ENCODE measurements at regions of chr13 and their contacts with region 1.

Region 1: GRCh38 chr13:46679369-46680120 is 117.4 kb downstream of the ESD start:
- ATAC-seq: peak in 4 of 8 experiments; percentile 26 to 98 (median 90)
- H3K4me3 ChIP-seq: no peak overlapping the region
- H3K27ac ChIP-seq: no peak overlapping the region
- H3K4me1 ChIP-seq: no peaks in the 10 kb centered on the region

Region 2: DNA sequence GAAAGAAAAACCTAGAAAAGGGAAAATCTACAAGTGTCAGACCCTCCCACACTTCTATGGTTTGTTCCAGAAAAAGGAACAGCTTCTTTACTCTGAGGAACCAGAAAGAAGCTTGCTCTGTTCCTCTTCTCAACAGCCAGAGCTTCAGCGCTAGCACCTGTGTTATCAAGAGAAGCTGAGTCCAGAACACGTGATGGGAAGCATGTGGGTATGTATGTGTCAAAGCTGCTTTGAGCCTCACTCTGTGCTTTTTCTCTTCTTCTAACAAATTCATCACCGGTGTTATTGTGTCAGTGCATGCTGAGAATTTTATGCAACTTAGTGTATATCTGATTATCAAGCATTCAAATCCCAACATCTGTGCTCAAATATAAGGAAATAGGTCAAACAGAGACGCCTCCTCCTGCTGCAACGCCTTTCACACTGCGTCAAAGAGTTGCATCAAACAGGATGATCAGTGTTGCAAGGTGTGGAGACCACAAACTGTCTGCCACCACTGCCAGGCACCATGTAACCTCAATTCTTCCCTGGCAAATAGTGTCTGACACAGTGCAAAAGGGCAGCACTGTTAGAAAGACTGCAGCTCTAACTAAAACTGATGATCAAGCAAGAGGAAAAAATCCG is 383.9 kb before region 1 on chr13:
- in situ Hi-C with region 1: no loop called
- ATAC-seq: peak in 3 of 8 experiments; percentile 18 to 58 (median 36)
- H3K4me3 ChIP-seq: no peak overlapping the region
- H3K27ac ChIP-seq: peak overlapping the region in 1 of 2 donors; percentile 66
- H3K4me1 ChIP-seq: peaks cover 0 to 2% of the 10 kb centered on the region in 2 donors

Region 3: DNA sequence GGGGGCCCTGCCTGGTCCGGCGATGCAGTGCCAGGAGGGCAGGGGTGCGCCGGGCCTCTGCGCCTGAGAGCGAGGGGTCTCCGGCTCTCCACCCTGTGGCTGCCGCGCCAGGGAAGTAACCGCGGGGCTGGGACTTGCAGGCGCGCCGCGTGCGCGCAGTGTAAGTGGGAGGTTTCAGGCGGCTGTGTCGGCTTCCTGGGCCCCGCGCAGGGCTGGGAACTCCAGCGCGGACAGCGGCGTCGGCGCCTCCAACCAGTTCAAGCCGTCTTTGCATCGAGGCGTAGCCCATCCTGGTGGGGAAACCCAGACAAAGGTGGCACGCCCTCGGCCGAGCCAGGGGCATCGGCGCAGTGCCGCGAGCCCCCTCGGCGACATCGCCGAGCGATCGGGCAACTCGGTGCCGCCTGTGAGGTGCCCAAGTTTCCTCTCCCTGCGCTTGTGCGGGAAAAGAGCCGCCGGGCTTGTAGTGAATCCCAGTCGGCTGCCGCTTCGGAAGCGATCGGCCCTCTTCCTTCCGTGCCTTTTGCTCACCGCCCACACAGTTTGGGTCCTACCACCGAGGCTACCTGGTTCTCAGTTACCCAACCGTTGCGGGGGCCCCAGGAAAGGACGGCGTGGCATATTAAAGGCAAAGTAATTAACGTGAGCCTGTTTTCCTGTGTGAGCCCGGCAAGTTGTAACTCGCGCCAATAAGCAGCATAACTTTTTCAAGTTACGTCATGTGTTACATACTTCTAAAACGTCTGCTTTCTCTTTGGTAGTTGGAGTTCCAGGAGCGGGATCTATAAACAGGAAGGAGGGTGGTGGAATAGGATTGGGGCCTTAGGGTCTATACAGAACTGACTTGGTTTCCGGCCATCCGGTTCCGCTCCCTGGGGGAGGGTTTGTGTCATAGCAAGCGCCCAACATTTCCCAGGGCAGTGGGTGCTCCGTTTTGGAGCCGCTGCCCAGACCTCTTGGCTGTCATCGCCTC is 125.4 kb before region 1 on chr13:
- in situ Hi-C with region 1: loop called in 1 of 9 experiments (anchors 25 kb)
- ATAC-seq: peak; percentile 52 to 66 (median 60)
- H3K4me3 ChIP-seq: peak overlapping the region; percentile 62 to 97 (median 80)
- H3K27ac ChIP-seq: peak overlapping the region; percentile 40 to 68
- H3K4me1 ChIP-seq: peaks cover 4 to 8% of the 10 kb centered on the region in 2 donors

Measured in motor neuron (in vitro differentiated cells).